ENCODE measurements at regions of chr2 and their contacts with region 1.

Region 1: DNA sequence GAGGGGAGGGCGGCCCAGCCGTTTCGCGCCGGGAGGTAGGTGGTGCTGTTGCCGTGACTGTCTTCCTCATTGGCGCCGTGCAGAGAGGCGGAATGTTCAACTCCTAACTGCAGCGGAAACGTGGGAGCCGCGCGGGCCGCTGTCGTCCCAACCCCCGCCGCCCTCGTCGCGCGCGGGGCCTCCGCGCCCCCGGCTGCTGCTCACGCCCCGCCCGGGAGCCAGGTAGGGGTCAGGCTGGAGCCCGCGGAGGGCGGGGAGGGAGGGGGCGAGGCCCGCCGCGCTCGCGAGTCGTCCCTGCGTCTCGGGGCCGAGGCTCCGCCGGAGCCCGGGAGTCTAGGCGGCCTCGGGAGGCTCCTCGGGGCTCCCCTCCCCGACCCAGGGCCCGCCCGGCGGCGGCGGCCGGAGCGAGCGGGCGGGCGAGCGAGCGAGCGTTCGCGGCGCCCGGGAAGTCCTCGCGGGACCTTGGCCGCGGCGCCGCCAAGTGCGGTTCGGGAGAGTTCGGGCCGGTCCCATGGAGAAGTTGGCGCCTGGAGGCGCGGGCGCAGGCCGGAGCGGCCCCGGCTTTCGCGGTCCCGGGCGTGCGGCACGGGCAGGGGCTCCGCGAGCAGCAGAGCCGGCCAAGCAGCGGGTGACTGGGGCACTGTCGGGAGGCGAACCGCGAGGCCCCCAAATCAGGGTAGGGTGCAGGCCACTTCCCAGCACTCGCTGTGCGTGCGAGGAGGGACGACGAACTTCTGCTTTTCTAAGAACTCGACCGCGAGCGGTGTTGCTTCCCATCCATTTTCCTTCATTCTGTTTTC is at the start of gene MAP3K20:
- DNase-seq: peak; percentile 81 to 91 (median 88)
- ATAC-seq: peak; percentile 67 to 89 (median 86)
- H3K4me3 ChIP-seq: peak within 1 kb of the TSS; percentile 64 to 85 (median 78)
- H3K27ac ChIP-seq: peak within 1 kb of the TSS; percentile 90 to 98 (median 96)
- H3K4me1 ChIP-seq: peaks cover 0 to 47% (median 18%) of the 10 kb centered on the region in 12 donors
- H3K27me3 ChIP-seq: no peaks in the 10 kb centered on the region
- CTCF ChIP-seq: peak in 11 of 12 donors; percentile 11 to 71 (median 54)
- POLR2A ChIP-seq: peak in 1 of 2 donors; percentile 71
- total RNA-seq, gene MAP3K20: 275 to 487 (median 451) TPM

Region 2: GRCh38 chr2:173037245-173038120 is 38.5 kb before region 1 on chr2:
- intact Hi-C with region 1: loop called in 5 of 10 experiments (anchors 5 kb)
- DNase-seq: peak in 3 of 5 donors; percentile 17 to 60 (median 47)
- ATAC-seq: peak; percentile 76 to 88 (median 84)
- H3K4me3 ChIP-seq: no peak overlapping the region
- H3K27ac ChIP-seq: peak overlapping the region in 11 of 12 donors; percentile 4 to 88 (median 64)
- H3K4me1 ChIP-seq: peaks cover 0 to 33% (median 14%) of the 10 kb centered on the region in 12 donors
- H3K27me3 ChIP-seq: no peaks in the 10 kb centered on the region
- CTCF ChIP-seq: no peak
- POLR2A ChIP-seq: no peak

Region 3: DNA sequence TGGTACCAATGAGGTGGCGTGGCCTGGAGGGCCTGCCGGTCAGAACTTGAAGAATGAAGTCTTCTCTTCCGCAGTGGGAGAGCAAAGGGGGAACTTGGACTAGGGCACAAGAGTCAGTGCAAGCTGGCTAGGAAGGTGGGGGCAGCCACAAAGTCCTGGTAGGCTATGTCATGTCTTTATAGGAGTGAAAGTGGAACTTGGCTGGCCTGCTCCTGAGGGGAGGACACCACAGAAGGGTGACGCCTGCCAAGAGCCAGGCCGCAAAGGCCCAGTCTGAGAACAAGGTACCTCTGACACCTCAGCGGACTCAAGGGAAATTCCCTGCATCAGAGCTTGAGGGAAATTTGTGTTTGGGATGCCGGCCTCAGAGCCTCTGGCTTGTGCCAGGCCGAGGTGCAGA is 32.5 kb before region 1 on chr2:
- intact Hi-C with region 1: loop called in 3 of 10 experiments (anchors 5 kb)
- DNase-seq: peak; percentile 27 to 73 (median 62)
- ATAC-seq: peak; percentile 62 to 88 (median 80)
- H3K4me3 ChIP-seq: no peak overlapping the region
- H3K27ac ChIP-seq: peak overlapping the region in 5 of 12 donors; percentile 23 to 58 (median 44)
- H3K4me1 ChIP-seq: peaks cover 0 to 19% (median 8%) of the 10 kb centered on the region in 12 donors
- H3K27me3 ChIP-seq: no peaks in the 10 kb centered on the region
- CTCF ChIP-seq: no peak
- POLR2A ChIP-seq: no peak

Region 4: GRCh38 chr2:173134703-173135102 is 58.7 kb after region 1 on chr2:
- intact Hi-C with region 1: loop called in 1 of 10 experiments (anchors 5 kb)
- DNase-seq: peak in 1 of 5 donors; percentile 37
- ATAC-seq: peak in 1 of 4 donors; percentile 44
- H3K4me3 ChIP-seq: no peak overlapping the region
- H3K27ac ChIP-seq: no peak overlapping the region
- H3K4me1 ChIP-seq: peaks cover 4 to 78% (median 54%) of the 10 kb centered on the region in 12 donors
- H3K27me3 ChIP-seq: peaks cover 0 to 11% (median 0%) of the 10 kb centered on the region in 9 donors
- CTCF ChIP-seq: no peak
- POLR2A ChIP-seq: no peak

Region 5: GRCh38 chr2:173191601-173192000 is 115.6 kb after region 1 on chr2:
- intact Hi-C with region 1: no loop called
- DNase-seq: no peak
- ATAC-seq: peak in 3 of 4 donors; percentile 31 to 59 (median 44)
- H3K4me3 ChIP-seq: no peak overlapping the region
- H3K27ac ChIP-seq: peak overlapping the region in 10 of 12 donors; percentile 9 to 79 (median 60)
- H3K4me1 ChIP-seq: peaks cover 3 to 92% (median 44%) of the 10 kb centered on the region in 12 donors
- H3K27me3 ChIP-seq: no peaks in the 10 kb centered on the region
- CTCF ChIP-seq: no peak
- POLR2A ChIP-seq: no peak

Measured in heart left ventricle (tissue), 16 donors.